ENCODE measurements at regions of chr11 and their contacts with region 1.

Region 1: GRCh38 chr11:45423475-45424120 is 137.5 kb upstream of the SYT13 start:
- DNase-seq: peak in 1 of 2 donors; percentile 30
- H3K4me3 ChIP-seq: no peak overlapping the region
- H3K27ac ChIP-seq: peak overlapping the region; percentile 82 to 84
- H3K4me1 ChIP-seq: peaks cover 0 to 40% (median 27%) of the 10 kb centered on the region in 4 donors
- H3K27me3 ChIP-seq: no peaks in the 10 kb centered on the region
- CTCF ChIP-seq: no peak

Region 2: GRCh38 chr11:45771566-45772448 is 348.2 kb after region 1 on chr11:
- intact Hi-C with region 1: loop called (anchors 2 kb)
- DNase-seq: peak; percentile 84 to 91
- H3K4me3 ChIP-seq: peak overlapping the region; percentile 48 to 59
- H3K27ac ChIP-seq: peak overlapping the region; percentile 73 to 75
- H3K4me1 ChIP-seq: peaks cover 0 to 11% (median 1%) of the 10 kb centered on the region in 4 donors
- H3K27me3 ChIP-seq: no peaks in the 10 kb centered on the region
- CTCF ChIP-seq: peak; percentile 95 to 97